Ascending aorta (tissue), 2 donors: ENCODE measurements at regions of chr7 and their contacts with region 1.

Region 1: DNA sequence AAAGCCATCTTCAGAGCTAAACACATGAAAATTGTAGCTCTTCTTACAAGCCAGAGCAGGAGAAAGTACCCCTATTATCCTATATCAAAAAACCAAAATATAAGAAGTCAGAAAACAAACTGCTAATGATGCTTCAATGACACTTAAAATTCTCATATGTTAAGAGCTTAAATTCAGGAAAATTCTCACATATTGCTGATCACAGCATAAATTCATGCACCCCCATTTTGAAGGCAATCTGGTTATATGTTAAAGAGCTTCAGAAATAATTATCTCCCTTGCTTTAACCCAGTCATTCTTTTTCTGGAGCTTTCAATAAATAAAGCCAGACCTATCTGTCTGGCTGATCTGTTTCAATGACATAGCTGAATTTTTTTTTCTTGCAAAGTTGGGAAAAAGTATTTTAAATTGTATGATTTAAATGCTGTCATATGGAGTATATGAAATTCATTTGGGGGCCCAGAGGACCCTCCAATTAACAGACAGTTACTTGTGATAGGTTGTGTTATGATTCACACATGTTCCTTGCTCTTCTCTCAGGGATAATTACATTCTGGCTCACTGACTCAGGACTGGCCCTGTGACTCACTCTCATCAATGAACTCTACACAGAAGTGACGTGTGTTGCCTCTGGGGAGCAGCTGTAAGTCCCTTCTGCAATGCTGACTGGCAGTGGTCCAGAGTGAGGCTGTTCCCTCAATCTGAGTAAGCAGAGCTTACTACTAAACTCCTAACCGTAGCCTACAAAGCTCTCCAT is 85.2 kb downstream of the HGF start:
- DNase-seq: peak; percentile 89 to 98
- H3K4me3 ChIP-seq: no peak overlapping the region
- H3K27ac ChIP-seq: no peak overlapping the region
- H3K4me1 ChIP-seq: peaks cover 0 to 5% of the 10 kb centered on the region in 2 donors
- H3K27me3 ChIP-seq: no peaks in the 10 kb centered on the region
- CTCF ChIP-seq: no peak

Region 2: GRCh38 chr7:81618396-81619014 is 66.2 kb before region 1 on chr7:
- intact Hi-C with region 1: loop called (anchors 5 kb)
- DNase-seq: peak in 1 of 2 donors; percentile 72
- H3K4me3 ChIP-seq: no peak overlapping the region
- H3K27ac ChIP-seq: peak overlapping the region; percentile 3 to 47
- H3K4me1 ChIP-seq: peaks cover 0 to 4% of the 10 kb centered on the region in 2 donors
- H3K27me3 ChIP-seq: no peaks in the 10 kb centered on the region
- CTCF ChIP-seq: no peak

Region 3: GRCh38 chr7:81638216-81638615 is 46.5 kb before region 1 on chr7:
- intact Hi-C with region 1: loop called (anchors 5 kb)
- DNase-seq: no peak
- H3K4me3 ChIP-seq: no peak overlapping the region
- H3K27ac ChIP-seq: peak overlapping the region; percentile 9 to 28
- H3K4me1 ChIP-seq: peaks cover 0 to 14% of the 10 kb centered on the region in 2 donors
- H3K27me3 ChIP-seq: no peaks in the 10 kb centered on the region
- CTCF ChIP-seq: no peak

Region 4: GRCh38 chr7:81769891-81770727 is 85.4 kb after region 1 on chr7 and contains the start of gene HGF:
- intact Hi-C with region 1: loop called (anchors 5 kb)
- DNase-seq: peak in 1 of 2 donors; percentile 79
- H3K4me3 ChIP-seq: peak within 1 kb of the TSS; percentile 41 to 75
- H3K27ac ChIP-seq: peak within 1 kb of the TSS; percentile 64 to 84
- H3K4me1 ChIP-seq: peaks cover 0 to 11% of the 10 kb centered on the region in 2 donors
- H3K27me3 ChIP-seq: no peaks in the 10 kb centered on the region
- CTCF ChIP-seq: peak in 1 of 3 experiments; percentile 29
- total RNA-seq, gene HGF: 11.7 TPM